ENCODE measurements at regions of chr7 and their contacts with region 1.

Region 1: DNA sequence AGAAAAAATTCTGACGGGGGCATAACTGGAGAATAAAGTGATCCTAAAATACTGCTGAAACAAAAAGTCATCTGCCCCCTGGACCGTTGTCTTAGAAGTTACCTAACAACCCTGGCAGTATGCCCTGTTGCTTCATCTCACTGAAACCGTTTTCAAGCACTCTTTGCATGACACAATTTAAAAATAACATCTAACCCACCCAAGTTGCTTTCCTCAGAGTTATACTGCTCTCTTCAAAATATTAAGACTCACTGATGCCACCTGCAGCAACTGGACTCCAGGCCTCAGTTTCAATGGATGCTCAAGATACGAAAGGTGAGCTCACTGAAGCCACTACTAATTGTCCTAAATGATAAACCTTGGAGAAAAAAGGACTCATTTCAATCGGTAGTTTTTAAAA is 57.4 kb downstream of the CDK6 start:
- DNase-seq: peak; percentile 51 to 82 (median 80)
- H3K4me3 ChIP-seq: no peak overlapping the region
- H3K27ac ChIP-seq: peak overlapping the region in 1 of 2 experiments; percentile 49
- H3K4me1 ChIP-seq: peaks cover 3 to 45% (median 19%) of the 10 kb centered on the region in 4 experiments
- H3K27me3 ChIP-seq: no peaks in the 10 kb centered on the region

Region 2: GRCh38 chr7:92761391-92762097 is 17.4 kb before region 1 on chr7:
- CTCF ChIA-PET with region 1: interaction called, 11 read pairs
- POLR2A ChIA-PET with region 1: interaction called, 3 read pairs
- DNase-seq: no peak
- H3K4me3 ChIP-seq: peak overlapping the region in 1 of 7 experiments; percentile 8
- H3K27ac ChIP-seq: peak overlapping the region in 1 of 2 experiments; percentile 45
- H3K4me1 ChIP-seq: peaks cover 17 to 52% (median 43%) of the 10 kb centered on the region in 4 experiments
- H3K27me3 ChIP-seq: no peaks in the 10 kb centered on the region

Region 3: GRCh38 chr7:92768501-92769393 is 10.2 kb before region 1 on chr7:
- CTCF ChIA-PET with region 1: interaction called, 11 read pairs
- POLR2A ChIA-PET with region 1: no interaction called
- DNase-seq: no peak
- H3K4me3 ChIP-seq: no peak overlapping the region
- H3K27ac ChIP-seq: peak overlapping the region in 1 of 2 experiments; percentile 72
- H3K4me1 ChIP-seq: peaks cover 19 to 56% (median 45%) of the 10 kb centered on the region in 4 experiments
- H3K27me3 ChIP-seq: no peaks in the 10 kb centered on the region

Region 4: GRCh38 chr7:92790992-92791391 is 12.0 kb after region 1 on chr7:
- CTCF ChIA-PET with region 1: interaction called, 28 read pairs
- POLR2A ChIA-PET with region 1: no interaction called
- DNase-seq: peak in 1 of 3 donors; percentile 30
- H3K4me3 ChIP-seq: no peak overlapping the region
- H3K27ac ChIP-seq: no peak overlapping the region
- H3K4me1 ChIP-seq: peaks cover 0 to 20% (median 9%) of the 10 kb centered on the region in 4 experiments
- H3K27me3 ChIP-seq: no peaks in the 10 kb centered on the region

Region 5: GRCh38 chr7:92799446-92800211 is 20.7 kb after region 1 on chr7:
- CTCF ChIA-PET with region 1: interaction called, 28 read pairs
- POLR2A ChIA-PET with region 1: no interaction called
- DNase-seq: peak in 1 of 3 donors; percentile 24
- H3K4me3 ChIP-seq: no peak overlapping the region
- H3K27ac ChIP-seq: peak overlapping the region; percentile 23 to 56
- H3K4me1 ChIP-seq: peaks cover 13 to 69% (median 34%) of the 10 kb centered on the region in 4 experiments
- H3K27me3 ChIP-seq: no peaks in the 10 kb centered on the region

Region 6: GRCh38 chr7:93238748-93239147 is 459.8 kb after region 1 on chr7:
- CTCF ChIA-PET with region 1: no interaction called
- POLR2A ChIA-PET with region 1: no interaction called
- DNase-seq: peak in 1 of 3 donors; percentile 21
- H3K4me3 ChIP-seq: no peak overlapping the region
- H3K27ac ChIP-seq: peak overlapping the region in 1 of 2 experiments; percentile 2
- H3K4me1 ChIP-seq: no peaks in the 10 kb centered on the region
- H3K27me3 ChIP-seq: no peaks in the 10 kb centered on the region